ENCODE measurements at regions of chr4 and their contacts with region 1.

Region 1: DNA sequence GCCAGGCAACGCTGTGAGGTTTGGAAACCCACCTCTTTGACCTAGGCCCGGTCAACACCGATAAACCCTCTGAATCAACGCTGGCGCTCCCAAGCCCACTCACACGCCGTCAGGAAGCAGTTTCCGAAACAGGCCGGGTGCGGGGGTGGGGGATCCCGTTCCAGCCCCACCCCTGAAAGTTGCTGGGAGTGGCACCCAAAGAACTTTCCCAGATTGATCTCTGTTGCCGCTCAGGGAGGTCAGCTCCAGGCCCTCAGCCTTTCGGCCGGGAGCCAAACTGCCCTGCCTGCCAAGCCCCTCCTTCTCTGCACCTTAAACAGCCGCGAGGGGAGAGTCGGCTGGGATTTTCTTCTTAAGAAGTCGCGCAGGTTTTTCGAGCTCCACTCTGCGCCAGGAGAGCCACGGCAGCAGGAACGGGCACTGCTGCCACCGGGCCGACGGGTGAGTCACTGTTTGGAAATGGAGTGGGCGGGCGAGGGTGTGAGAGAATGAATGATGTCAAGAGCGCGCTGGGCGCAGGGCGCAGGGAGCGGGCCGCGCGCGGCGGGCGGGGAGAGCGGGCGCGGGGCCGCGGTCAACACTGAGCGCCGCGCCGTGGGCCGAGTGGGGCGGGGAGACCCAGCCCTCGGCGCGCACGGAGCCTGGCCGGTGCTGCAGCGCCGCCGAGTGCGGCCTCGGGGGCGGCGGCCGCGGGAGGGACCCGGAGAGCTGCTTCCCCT is at the start of gene SGMS2:
- DNase-seq: peak; percentile 91 to 93
- ATAC-seq: peak; percentile 91 to 96 (median 94)
- H3K4me3 ChIP-seq: peak within 1 kb of the TSS; percentile 90
- H3K27ac ChIP-seq: peak within 1 kb of the TSS; percentile 97
- H3K4me1 ChIP-seq: peaks cover 23% of the 10 kb centered on the region
- H3K27me3 ChIP-seq: no peaks in the 10 kb centered on the region
- CTCF ChIP-seq: no peak
- total RNA-seq, gene SGMS2: 4.6 to 14.2 (median 9.6) TPM

Region 2: GRCh38 chr4:107392951-107393350 is 431.6 kb before region 1 on chr4:
- intact Hi-C with region 1: no loop called
- DNase-seq: peak; percentile 32 to 66
- ATAC-seq: peak in 3 of 4 donors; percentile 59 to 70 (median 64)
- H3K4me3 ChIP-seq: no peak overlapping the region
- H3K27ac ChIP-seq: no peak overlapping the region
- H3K4me1 ChIP-seq: no peaks in the 10 kb centered on the region
- H3K27me3 ChIP-seq: no peaks in the 10 kb centered on the region
- CTCF ChIP-seq: no peak

Region 3: DNA sequence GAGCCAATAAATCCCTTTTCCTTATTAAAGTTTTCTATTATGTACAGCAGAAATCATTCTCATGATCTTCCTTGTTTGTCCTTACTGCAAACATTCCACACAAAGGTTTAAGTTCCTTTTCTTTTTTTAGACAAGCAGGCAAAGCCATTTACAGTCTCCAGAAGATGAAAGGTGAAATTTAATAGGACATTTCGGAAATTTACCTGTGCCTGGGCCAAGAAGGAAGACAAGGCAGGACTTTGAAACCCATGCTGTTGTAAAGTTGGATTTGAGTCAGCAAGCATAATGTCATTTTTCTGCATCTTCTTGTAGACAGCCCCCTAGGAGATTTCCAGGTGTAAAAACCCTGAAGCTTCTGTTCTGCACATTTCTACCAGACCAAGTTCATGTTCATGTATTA is 292.6 kb before region 1 on chr4:
- intact Hi-C with region 1: no loop called
- DNase-seq: no peak
- ATAC-seq: no peak
- H3K4me3 ChIP-seq: no peak overlapping the region
- H3K27ac ChIP-seq: no peak overlapping the region
- H3K4me1 ChIP-seq: no peaks in the 10 kb centered on the region
- H3K27me3 ChIP-seq: no peaks in the 10 kb centered on the region
- CTCF ChIP-seq: no peak

Region 4: DNA sequence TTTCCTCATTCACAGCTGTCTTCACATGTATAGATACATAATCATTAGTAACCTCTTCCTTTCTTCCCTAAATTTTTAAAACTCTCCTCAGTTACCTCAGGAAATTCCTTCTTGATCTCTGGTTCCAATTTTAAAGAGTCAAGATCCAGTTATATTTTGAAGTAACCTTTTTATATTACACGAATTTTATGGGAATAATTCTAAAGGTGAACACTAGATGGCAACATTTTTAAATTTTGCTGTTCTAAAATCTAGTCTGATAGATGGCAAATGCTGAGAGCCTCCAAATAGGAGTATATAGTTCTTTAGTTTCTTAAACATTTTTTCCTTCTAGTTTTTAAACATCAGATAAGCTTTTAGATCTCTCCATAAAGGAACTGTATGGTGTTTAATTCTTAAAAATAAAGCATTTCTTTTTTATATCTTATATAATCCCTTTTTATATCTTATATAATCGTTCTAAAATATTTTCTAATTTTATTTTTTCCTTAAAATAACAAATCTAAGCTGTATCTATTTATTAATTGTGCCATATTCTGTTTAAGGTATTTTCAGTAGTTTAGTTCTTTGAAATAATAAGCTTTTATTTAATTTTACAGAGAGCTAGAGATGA is 66.5 kb before region 1 on chr4:
- intact Hi-C with region 1: loop called in 1 of 2 experiments (anchors 2 kb)
- DNase-seq: no peak
- ATAC-seq: peak in 2 of 4 donors; percentile 66 to 76
- H3K4me3 ChIP-seq: no peak overlapping the region
- H3K27ac ChIP-seq: no peak overlapping the region
- H3K4me1 ChIP-seq: no peaks in the 10 kb centered on the region
- H3K27me3 ChIP-seq: no peaks in the 10 kb centered on the region
- CTCF ChIP-seq: peak; percentile 71

Region 5: DNA sequence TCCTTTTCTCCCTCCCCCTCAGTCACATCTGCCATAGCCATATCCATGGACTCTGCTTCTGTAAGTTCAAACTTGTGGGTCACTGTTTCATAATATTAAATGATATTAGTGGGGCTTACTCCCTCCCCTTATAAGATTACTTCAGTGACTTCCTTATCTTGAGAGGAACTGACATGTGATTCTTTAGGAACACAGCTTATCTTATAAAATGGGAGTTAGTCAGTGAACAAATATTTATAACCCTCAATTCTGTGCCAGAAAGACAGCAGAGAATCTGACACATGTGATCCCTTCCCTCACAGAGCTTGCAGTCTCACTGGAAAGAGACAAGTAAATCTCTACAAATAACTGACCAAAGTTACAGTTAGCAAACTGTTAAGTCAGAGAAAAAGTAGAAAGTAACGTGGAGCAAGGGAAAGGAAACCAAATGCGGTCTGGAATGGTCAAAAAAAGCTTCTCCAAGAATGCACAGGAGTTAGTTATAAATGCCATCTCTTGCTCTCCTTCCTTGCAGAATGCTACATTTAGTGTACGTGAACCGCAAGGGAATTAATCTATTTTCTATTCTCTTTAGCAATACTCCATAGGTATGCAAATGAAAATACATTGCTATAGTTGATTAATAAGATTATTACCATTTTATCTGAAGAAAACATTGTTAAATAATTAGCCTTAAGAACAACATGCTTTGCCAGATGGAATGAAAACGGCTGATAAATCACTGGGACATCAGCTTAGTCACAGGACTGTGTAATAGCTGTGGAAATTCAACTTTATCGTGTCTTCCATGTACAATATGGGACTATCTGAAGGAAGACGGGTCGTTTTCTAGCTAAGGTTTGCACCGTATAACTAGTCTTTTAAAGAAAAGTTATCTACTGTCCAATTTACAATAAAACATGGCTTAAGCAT is 29.2 kb after region 1 on chr4:
- intact Hi-C with region 1: loop called in 1 of 2 experiments (anchors 2 kb)
- DNase-seq: no peak
- ATAC-seq: peak; percentile 60 to 82 (median 68)
- H3K4me3 ChIP-seq: peak overlapping the region; percentile 51
- H3K27ac ChIP-seq: peak overlapping the region; percentile 51
- H3K4me1 ChIP-seq: peaks cover 32% of the 10 kb centered on the region
- H3K27me3 ChIP-seq: no peaks in the 10 kb centered on the region
- CTCF ChIP-seq: no peak

Region 6: GRCh38 chr4:107863850-107864371 is 39.4 kb after region 1 on chr4:
- intact Hi-C with region 1: no loop called
- DNase-seq: peak in 1 of 2 donors; percentile 16
- ATAC-seq: peak; percentile 52 to 76 (median 72)
- H3K4me3 ChIP-seq: no peak overlapping the region
- H3K27ac ChIP-seq: no peak overlapping the region
- H3K4me1 ChIP-seq: peaks cover 4% of the 10 kb centered on the region
- H3K27me3 ChIP-seq: no peaks in the 10 kb centered on the region
- CTCF ChIP-seq: no peak

Region 7: DNA sequence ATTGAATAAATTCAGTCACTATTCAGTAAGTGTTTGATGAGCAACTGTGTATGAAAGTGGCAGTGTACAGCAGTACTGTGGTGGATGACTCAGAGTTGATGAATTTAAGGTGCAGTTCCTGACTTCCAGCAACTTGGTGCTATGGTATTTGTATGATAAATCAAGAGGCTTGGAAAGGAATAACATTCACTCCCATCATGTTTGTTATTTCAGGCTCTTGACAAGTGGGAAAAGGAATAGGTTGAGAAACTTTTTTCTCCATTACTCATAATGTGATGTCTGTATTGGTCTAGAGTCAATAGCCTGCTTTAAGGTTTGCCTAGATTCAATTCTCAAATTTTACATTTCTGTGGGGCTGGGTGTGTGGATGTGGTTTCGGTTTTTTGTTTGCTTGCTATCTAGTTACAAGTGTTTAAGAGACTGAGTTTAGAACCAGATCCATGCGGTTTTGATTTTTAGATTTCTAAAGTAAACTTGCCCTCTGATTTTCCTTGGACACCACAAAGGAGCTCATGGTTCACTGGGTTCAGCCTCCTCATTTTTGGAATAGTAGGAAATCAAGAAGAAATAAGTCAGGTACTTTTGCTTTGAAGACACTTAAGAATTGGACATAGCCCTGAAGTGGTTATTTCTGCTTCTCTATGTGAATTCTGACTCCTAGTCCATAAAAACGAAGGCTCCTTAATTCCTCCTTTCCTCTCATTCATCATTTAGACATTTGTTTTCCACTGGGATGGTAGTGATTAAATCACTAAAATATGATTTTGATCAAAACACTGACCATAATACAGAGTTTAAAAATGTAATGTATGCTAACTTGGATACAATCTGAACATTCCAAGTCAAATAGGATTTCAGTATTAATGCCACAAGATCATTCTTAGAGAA is 71.9 kb after region 1 on chr4:
- intact Hi-C with region 1: loop called in 1 of 2 experiments (anchors 10 kb)
- DNase-seq: no peak
- ATAC-seq: peak; percentile 42 to 87 (median 80)
- H3K4me3 ChIP-seq: no peak overlapping the region
- H3K27ac ChIP-seq: no peak overlapping the region
- H3K4me1 ChIP-seq: peaks cover 8% of the 10 kb centered on the region
- H3K27me3 ChIP-seq: no peaks in the 10 kb centered on the region
- CTCF ChIP-seq: no peak

Region 8: DNA sequence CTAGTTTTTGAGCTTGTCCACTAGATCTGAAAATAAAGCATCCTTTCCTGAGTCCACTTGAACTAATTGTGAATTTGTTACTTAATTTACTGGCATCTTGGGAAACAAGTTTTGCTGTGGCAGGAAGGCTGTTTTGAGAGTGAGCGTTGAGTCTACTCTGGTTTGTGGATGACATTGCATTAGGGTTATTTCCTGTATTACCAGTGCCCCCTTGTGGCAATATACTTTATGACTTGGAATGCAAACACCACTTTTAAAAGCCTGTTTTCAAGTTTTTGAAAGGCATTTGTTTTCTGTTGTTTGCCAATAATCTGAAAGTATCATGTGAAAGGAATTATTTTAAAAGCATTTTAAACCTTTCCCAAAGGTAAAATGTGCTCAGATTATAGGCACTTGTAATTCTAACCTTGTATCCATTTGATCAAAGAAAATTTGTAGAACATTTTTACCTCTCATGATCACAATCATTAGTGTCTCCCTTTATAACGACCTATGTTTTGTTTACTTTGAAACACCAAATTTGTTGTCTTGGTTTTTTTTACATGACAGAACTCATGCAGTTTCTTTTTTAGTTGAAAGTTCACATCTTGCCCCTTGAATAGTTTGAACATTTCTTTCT is 88.9 kb after region 1 on chr4:
- intact Hi-C with region 1: loop called in 1 of 2 experiments (anchors 5 kb)
- DNase-seq: no peak
- ATAC-seq: peak; percentile 79 to 93 (median 88)
- H3K4me3 ChIP-seq: no peak overlapping the region
- H3K27ac ChIP-seq: no peak overlapping the region
- H3K4me1 ChIP-seq: no peaks in the 10 kb centered on the region
- H3K27me3 ChIP-seq: no peaks in the 10 kb centered on the region
- CTCF ChIP-seq: peak; percentile 88

Region 9: GRCh38 chr4:107989537-107990386 is 165.2 kb after region 1 on chr4 and contains the start of gene HADH:
- intact Hi-C with region 1: loop called in 1 of 2 experiments (anchors 10 kb)
- DNase-seq: peak; percentile 95 to 96
- ATAC-seq: peak; percentile 96 to 100 (median 98)
- H3K4me3 ChIP-seq: peak within 1 kb of the TSS; percentile 91
- H3K27ac ChIP-seq: peak within 1 kb of the TSS; percentile 98
- H3K4me1 ChIP-seq: peaks cover 50% of the 10 kb centered on the region
- H3K27me3 ChIP-seq: no peaks in the 10 kb centered on the region
- CTCF ChIP-seq: no peak
- total RNA-seq, gene HADH: 84.4 to 150 (median 118) TPM